ENCODE measurements at regions of chr6 and their contacts with region 1.

Region 1: GRCh38 chr6:25035527-25036435 is 100.0 kb upstream of the RIPOR2 start:
- DNase-seq: no peak
- H3K4me3 ChIP-seq: no peak overlapping the region
- CTCF ChIP-seq: no peak

Region 2: DNA sequence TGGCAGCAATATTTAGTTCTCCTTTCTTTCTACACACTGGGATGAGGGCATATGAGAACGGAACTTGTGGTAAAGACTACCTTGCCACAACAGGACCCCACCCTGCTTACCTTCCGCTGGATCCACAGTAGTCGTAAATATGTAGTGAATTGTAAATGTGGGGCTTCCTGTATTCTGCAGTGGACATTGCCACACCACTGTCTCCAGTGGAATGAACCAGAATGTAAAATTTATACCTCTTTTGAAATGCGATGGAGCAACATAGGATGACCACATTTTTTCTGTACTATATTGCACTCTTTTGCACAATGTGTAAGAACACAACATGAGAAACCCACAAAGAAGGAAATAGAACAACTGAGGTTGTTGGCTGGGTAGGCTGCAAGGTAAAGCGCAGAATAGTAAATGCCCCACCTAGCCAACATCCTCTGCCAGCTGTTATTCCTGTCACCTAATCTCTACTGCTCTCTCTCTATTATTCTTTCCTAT is 83.9 kb before region 1 on chr6:
- in situ Hi-C with region 1: no loop called
- DNase-seq: no peak
- H3K4me3 ChIP-seq: no peak overlapping the region
- CTCF ChIP-seq: no peak

Region 3: DNA sequence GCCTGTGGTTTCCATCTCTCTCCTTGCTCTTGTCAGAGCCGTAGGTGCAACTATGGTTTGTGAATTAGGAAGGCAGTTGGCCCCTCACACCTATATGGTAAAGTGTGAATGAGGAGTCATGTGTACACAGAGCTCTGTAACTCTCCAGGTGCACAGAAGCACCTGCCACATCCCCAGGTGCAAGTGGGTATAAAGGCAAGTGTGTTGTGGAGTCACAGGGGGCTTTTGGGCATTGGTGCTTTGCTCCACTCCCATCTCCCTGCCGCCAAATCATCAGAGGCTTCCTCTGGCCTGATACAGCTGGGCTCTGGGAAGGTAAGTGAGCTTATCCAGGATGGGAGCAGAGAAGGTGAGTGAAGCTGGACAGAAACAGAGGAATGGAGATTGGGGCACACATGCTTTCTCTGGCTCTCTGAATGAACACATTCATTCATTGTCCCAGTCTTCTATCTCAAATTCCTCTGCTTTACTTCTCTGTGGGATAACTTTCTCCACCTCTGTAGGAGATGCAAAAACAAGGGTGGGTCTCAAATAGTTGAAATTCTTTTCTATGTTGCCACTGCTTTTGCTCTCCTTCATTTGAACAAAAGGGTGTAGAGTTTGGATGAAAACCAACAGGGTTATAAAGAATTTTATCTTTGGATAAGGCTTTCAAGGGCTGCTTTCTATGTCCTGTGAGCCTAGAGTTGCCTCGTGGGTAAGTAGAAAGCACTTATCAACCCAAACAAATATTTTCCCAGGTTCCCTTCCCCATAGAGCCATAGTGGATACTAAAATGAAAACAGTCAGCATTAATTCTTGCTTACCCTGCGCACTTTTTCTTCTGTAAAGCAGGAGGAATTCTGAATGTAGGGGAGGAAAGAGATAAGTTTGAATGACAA is 55.0 kb before region 1 on chr6:
- in situ Hi-C with region 1: loop called (anchors 5 kb)
- DNase-seq: no peak
- H3K4me3 ChIP-seq: no peak overlapping the region
- CTCF ChIP-seq: no peak